ENCODE measurements at regions of chr2 and their contacts with region 1.

Region 1: GRCh38 chr2:88606371-88607030 is 20.8 kb downstream of the EIF2AK3 start:
- DNase-seq: peak; percentile 34
- CTCF ChIP-seq: no peak

Region 2: DNA sequence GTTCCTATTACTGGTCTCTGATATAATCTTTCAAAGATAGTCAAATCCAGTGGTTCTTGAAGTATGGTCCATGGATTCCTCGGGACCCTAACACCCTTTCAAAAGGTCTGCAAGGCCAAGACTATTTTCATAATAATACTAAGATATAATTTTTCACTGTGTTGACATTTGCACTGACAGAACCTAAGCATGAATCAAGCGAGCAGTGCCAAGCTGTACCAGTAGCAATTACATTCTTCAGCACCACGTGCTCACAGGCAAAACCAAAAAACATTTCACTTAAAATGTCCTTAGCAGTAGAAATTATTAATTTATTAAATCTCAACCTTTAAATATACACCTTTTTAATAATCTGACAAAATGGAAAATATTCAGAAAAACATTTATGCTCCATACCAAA is 38.3 kb before region 1 on chr2:
- CTCF ChIA-PET with region 1: no interaction called
- POLR2A ChIA-PET with region 1: interaction called, 12 read pairs
- DNase-seq: no peak
- CTCF ChIP-seq: no peak

Region 3: GRCh38 chr2:88590998-88591613 is 15.4 kb before region 1 on chr2:
- CTCF ChIA-PET with region 1: interaction called, 11 read pairs
- POLR2A ChIA-PET with region 1: no interaction called
- DNase-seq: peak; percentile 48
- CTCF ChIP-seq: peak; percentile 67

Region 4: GRCh38 chr2:88620015-88620414 is 13.5 kb after region 1 on chr2:
- CTCF ChIA-PET with region 1: interaction called, 17 read pairs
- POLR2A ChIA-PET with region 1: interaction called, 4 read pairs
- DNase-seq: no peak
- CTCF ChIP-seq: no peak

Region 5: GRCh38 chr2:88627056-88627855 is 20.8 kb after region 1 on chr2 and contains the start of gene EIF2AK3:
- CTCF ChIA-PET with region 1: interaction called, 5 read pairs
- POLR2A ChIA-PET with region 1: interaction called, 12 read pairs
- DNase-seq: peak; percentile 93
- CTCF ChIP-seq: no peak